GM12878 (cell line): ENCODE measurements at regions of chr6 and their contacts with region 1.

Region 1: GRCh38 chr6:85612690-85613474 is 19.2 kb upstream of the SNX14 start:
- DNase-seq: no peak
- ATAC-seq: no peak
- H3K4me3 ChIP-seq: no peak overlapping the region
- H3K27ac ChIP-seq: no peak overlapping the region
- H3K4me1 ChIP-seq: no peaks in the 10 kb centered on the region
- H3K27me3 ChIP-seq: no peaks in the 10 kb centered on the region
- CTCF ChIP-seq: no peak
- EP300 ChIP-seq: no peak
- POLR2A ChIP-seq: no peak
- RAD21 ChIP-seq: no peak

Region 2: DNA sequence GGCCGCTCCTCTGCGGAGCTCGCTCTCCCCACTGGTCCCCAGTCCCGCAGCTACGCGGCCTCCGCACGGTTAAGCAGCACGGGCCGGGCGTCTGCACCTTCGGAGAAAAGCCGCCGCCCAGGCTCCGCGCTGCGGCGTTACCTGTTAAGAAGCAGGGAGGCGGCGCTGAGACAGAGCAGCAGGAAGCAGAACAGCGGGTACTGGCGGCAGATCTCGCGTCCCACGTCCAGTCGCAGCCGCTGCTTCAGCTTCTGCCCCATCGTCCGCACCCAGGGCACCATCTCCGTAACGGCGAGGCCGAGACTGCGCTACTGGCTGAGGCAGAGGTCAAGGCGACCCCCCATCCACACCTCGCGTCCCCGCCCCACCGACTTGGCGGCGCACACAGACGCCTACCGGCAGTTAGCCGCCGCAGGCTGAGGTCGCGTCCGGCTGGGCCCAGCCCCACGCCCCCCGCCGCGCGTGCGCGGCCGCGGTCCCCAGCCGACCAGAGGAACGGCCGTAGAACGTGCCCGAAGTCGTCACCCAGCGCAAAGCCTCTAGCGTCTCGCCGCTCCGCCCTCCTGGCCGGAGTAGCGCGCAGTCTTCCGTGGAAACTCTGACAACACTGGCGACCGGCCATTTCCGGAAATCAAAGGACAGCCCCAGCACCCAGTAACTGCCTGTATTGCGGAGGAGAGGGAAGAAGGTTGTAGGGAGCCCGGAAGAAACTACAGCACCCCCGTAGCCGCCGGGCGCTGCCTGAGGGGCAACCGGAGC is 19.3 kb before region 1 on chr6 and contains the start of gene SNX14:
- CTCF ChIA-PET with region 1: interaction called, 5 read pairs
- POLR2A ChIA-PET with region 1: interaction called, 10 read pairs
- RAD21 ChIA-PET with region 1: no interaction called
- SMC1A ChIA-PET with region 1: interaction called, 11 read pairs
- in situ Hi-C with region 1: no loop called
- intact Hi-C with region 1: no loop called
- DNase-seq: peak; percentile 86
- ATAC-seq: peak; percentile 92
- H3K4me3 ChIP-seq: peak within 1 kb of the TSS; percentile 95
- H3K27ac ChIP-seq: peak within 1 kb of the TSS; percentile 67
- H3K4me1 ChIP-seq: no peaks in the 10 kb centered on the region
- H3K27me3 ChIP-seq: no peaks in the 10 kb centered on the region
- CTCF ChIP-seq: 0 out of 6 replicates have a peak, but pooled peaks of 1 of the 3 experiments have one; percentile 8
- EP300 ChIP-seq: 0 out of 4 replicates have a peak, but pooled peaks of 1 of the 2 experiments have one; percentile 8
- POLR2A ChIP-seq: peak; percentile 96
- RAD21 ChIP-seq: no peak
- polyA plus RNA-seq, gene SNX14: 34.2 to 50.9 TPM